ENCODE measurements at regions of chr12 and their contacts with region 1.

Region 1: DNA sequence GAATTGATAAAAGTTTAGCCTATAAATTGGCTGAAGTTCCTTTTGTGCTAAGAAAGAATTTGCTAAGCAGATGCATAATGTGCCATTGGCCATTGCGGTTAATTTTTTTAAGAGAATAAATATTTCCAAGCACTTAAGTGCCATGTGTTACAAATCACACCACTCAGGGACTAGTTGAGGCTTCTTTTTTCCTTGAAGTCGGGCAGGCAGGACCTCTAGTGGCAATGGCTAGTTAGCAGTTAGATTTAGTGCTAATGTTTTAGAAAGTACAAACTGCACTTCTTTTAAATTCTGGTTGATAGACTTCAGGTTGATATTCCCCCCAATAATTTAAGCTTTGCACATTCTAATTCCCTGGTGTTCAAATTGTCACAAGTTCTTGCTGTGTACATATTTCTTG is 294.3 kb downstream of the APAF1 start:
- DNase-seq: peak in 38 of 42 donors; percentile 14 to 81 (median 49)

Region 2: GRCh38 chr12:98725476-98726247 is 213.7 kb before region 1 on chr12:
- intact Hi-C with region 1: loop called (anchors 10 kb)
- DNase-seq: peak; percentile 34 to 91 (median 78)

Region 3: GRCh38 chr12:98973395-98973794 is 34.0 kb after region 1 on chr12:
- intact Hi-C with region 1: no loop called
- DNase-seq: no peak